B cell (primary cell): ENCODE measurements at regions of chr12 and their contacts with region 1.

Region 1: GRCh38 chr12:31647086-31647491 is 12.4 kb upstream of the ETFBKMT start:
- DNase-seq: peak; percentile 44
- ATAC-seq: peak; percentile 28
- H3K4me3 ChIP-seq: no peak overlapping the region
- H3K4me3 Mint-ChIP-seq: peak overlapping the region; percentile 24
- H3K27ac ChIP-seq: no peak overlapping the region
- H3K27ac Mint-ChIP-seq: peak overlapping the region; percentile 38
- H3K4me1 ChIP-seq: peaks cover 21 to 22% of the 10 kb centered on the region in 2 donors
- H3K4me1 Mint-ChIP-seq: peaks cover 29% of the 10 kb centered on the region
- H3K27me3 ChIP-seq: no peaks in the 10 kb centered on the region
- H3K27me3 Mint-ChIP-seq: no peaks in the 10 kb centered on the region
- CTCF ChIP-seq: no peak

Region 2: DNA sequence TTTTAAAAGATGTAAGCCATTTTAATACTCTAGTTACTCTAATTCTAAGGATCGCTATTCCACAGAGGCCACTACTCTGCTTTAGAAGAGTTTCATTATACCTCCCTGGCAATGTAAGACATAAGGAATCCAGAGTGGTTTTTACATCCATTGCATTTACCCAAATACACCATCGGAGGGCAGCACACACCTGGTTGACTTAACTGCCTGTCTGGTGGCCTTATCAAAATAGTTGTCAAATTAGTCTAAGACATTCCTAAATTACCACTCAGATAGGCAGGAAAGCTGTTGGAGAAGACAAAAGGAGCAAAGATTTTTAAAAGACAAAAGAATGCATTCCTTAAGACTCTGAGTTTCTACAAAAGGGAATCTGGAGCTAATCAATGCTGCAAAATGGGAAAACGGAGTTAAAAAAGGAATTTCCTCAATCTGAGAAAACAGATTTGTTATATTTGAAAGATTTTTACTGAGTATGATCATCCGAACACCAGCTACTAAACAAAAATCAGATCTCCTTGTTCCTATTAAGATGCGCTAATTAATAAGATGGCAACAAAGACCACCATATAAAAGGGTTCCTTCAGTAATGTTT is 718.5 kb after region 1 on chr12:
- CTCF ChIA-PET with region 1: interaction called, 15 read pairs
- POLR2A ChIA-PET with region 1: interaction called, 3 read pairs
- intact Hi-C with region 1: no loop called
- DNase-seq: peak; percentile 60
- ATAC-seq: peak; percentile 43
- H3K4me3 ChIP-seq: no peak overlapping the region
- H3K4me3 Mint-ChIP-seq: no peak overlapping the region
- H3K27ac ChIP-seq: no peak overlapping the region
- H3K27ac Mint-ChIP-seq: no peak overlapping the region
- H3K4me1 ChIP-seq: no peaks in the 10 kb centered on the region
- H3K4me1 Mint-ChIP-seq: no peaks in the 10 kb centered on the region
- H3K27me3 ChIP-seq: no peaks in the 10 kb centered on the region
- H3K27me3 Mint-ChIP-seq: no peaks in the 10 kb centered on the region
- CTCF ChIP-seq: peak; percentile 88